HCT116 (cell line): ENCODE measurements at regions of chr5 and their contacts with region 1.

Region 1: DNA sequence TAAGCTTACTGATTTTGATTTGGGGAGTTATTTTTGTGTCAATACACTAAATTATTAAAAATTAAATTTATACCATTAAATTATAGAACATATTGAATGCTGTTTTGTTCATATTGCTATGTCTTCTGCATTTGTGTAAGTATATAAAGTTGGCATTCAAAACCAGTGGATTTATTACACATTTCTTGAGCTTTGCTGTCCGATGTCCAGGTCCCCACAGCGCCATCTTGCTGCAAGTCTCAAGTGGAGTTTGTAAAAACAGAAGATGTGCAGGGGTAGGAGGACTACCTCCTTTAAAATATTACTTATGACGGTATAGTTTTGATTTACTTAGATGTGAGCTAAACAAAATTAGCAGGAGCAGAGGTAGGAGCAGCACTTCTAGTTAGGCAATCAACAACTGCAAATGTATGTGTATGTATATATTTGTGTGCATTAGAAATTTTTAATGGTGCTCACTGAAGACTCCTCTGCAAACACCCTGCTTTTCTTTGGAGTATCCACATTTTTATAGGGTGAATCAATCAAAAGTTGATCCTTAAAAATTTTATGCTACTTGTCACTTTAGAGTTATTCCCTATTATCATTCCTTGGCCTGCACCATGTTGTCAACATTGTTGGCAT is 37.4 kb downstream of the CPEB4 start:
- DNase-seq: peak; percentile 38
- ATAC-seq: peak; percentile 67
- H3K4me3 ChIP-seq: no peak overlapping the region
- H3K27ac ChIP-seq: no peak overlapping the region
- H3K4me1 ChIP-seq: no peaks in the 10 kb centered on the region
- H3K27me3 ChIP-seq: no peaks in the 10 kb centered on the region
- CTCF ChIP-seq: peak; percentile 44 to 72 (median 72); a peak in 5 of 6 replicates
- POLR2A ChIP-seq: no peak
- RAD21 ChIP-seq: peak; percentile 69

Region 2: GRCh38 chr5:173629628-173630027 is 295.9 kb before region 1 on chr5:
- CTCF ChIA-PET with region 1: interaction called, 4 read pairs
- POLR2A ChIA-PET with region 1: no interaction called
- RAD21 ChIA-PET with region 1: no interaction called
- intact Hi-C with region 1: loop called (anchors 5 kb)
- DNase-seq: no peak
- ATAC-seq: peak; percentile 88
- H3K4me3 ChIP-seq: no peak overlapping the region
- H3K27ac ChIP-seq: no peak overlapping the region
- H3K4me1 ChIP-seq: no peaks in the 10 kb centered on the region
- H3K27me3 ChIP-seq: peaks cover 4% of the 10 kb centered on the region; the same call in 1 of the 2 replicates
- CTCF ChIP-seq: peak; percentile 21 to 71 (median 68); a peak in 4 of 6 replicates
- POLR2A ChIP-seq: no peak
- RAD21 ChIP-seq: peak; percentile 50

Region 3: GRCh38 chr5:173915310-173916014 is 10.1 kb before region 1 on chr5:
- CTCF ChIA-PET with region 1: interaction called, 15 read pairs
- POLR2A ChIA-PET with region 1: interaction called, 3 read pairs
- RAD21 ChIA-PET with region 1: no interaction called
- intact Hi-C with region 1: no loop called
- DNase-seq: no peak
- ATAC-seq: no peak
- H3K4me3 ChIP-seq: no peak overlapping the region
- H3K27ac ChIP-seq: no peak overlapping the region
- H3K4me1 ChIP-seq: peaks cover 3 to 24% of the 10 kb centered on the region in 2 experiments; a peak in 3 of 4 replicates
- H3K27me3 ChIP-seq: no peaks in the 10 kb centered on the region
- CTCF ChIP-seq: no peak
- POLR2A ChIP-seq: no peak
- RAD21 ChIP-seq: no peak